ENCODE measurements at regions of chr21 and their contacts with region 1.

Region 1: DNA sequence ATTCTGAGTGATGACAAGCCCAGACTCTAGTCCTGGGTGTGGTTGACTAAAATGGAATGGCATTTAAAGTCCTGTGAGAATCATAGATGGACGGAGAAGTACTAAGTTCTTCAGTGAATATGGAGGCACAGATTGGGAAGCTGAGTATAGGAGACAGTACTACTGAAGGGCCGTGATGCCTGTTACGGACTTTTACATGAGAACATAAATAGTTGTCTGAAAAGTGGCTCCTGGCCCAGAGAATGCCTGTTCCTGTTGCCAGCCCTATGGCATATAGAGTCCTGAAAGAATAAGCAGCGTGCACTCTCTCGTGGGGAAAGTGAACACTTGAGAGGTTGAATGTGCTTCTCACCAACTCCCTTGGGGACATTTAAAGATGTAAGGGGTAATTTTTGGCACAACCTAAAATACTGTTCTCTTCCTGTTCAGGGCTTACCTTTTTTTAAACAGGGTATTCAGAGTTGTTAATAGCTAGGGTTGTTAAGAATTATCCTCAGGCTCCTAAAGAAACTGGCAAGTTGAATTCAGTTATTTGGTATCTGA is 20.4 kb downstream of the CCT8 start:
- DNase-seq: no peak
- ATAC-seq: peak; percentile 26; the same call in 1 of the 2 replicates
- H3K4me3 ChIP-seq: no peak overlapping the region
- H3K27ac ChIP-seq: no peak overlapping the region
- H3K4me1 ChIP-seq: no peaks in the 10 kb centered on the region
- H3K27me3 ChIP-seq: no peaks in the 10 kb centered on the region
- CTCF ChIP-seq: no peak

Region 2: DNA sequence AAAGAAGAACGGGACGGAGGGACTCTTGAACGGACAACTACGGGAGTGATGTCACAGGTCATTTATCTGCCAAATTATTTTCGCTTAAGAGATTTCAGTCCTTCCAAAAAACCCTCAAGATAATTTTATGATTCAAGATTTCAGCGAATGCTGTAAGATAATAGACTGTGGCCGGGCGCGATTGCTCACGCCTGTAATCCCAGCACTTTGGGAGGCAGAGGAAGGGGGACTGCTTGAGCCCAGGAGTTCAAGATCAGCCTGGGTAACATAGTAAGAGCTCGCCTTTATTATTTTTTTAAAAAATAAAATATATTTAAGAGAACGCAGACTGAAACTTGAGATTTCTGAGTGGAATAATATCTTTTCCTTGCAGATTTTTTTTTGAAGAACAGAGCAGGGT is 34.5 kb before region 1 on chr21:
- CTCF ChIA-PET with region 1: no interaction called
- POLR2A ChIA-PET with region 1: interaction called, 12 read pairs
- in situ Hi-C with region 1: no loop called
- intact Hi-C with region 1: no loop called
- DNase-seq: no peak
- ATAC-seq: peak; percentile 19; the same call in 1 of the 2 replicates
- H3K4me3 ChIP-seq: peak overlapping the region; percentile 71 to 82
- H3K27ac ChIP-seq: peak overlapping the region; percentile 84
- H3K4me1 ChIP-seq: peaks cover 5% of the 10 kb centered on the region; the same call in 1 of the 2 replicates
- H3K27me3 ChIP-seq: no peaks in the 10 kb centered on the region
- CTCF ChIP-seq: no peak

Measured in Panc1 (cell line).